Activated CD4-positive, alpha-beta T cell treated with anti-CD3 and anti-CD28 coated beads, Interleukin-2, amount 10 ng/mL, durations not matched to agents 7 days and 5 days (primary cell): ENCODE measurements at regions of chr6 and their contacts with region 1.

Region 1: DNA sequence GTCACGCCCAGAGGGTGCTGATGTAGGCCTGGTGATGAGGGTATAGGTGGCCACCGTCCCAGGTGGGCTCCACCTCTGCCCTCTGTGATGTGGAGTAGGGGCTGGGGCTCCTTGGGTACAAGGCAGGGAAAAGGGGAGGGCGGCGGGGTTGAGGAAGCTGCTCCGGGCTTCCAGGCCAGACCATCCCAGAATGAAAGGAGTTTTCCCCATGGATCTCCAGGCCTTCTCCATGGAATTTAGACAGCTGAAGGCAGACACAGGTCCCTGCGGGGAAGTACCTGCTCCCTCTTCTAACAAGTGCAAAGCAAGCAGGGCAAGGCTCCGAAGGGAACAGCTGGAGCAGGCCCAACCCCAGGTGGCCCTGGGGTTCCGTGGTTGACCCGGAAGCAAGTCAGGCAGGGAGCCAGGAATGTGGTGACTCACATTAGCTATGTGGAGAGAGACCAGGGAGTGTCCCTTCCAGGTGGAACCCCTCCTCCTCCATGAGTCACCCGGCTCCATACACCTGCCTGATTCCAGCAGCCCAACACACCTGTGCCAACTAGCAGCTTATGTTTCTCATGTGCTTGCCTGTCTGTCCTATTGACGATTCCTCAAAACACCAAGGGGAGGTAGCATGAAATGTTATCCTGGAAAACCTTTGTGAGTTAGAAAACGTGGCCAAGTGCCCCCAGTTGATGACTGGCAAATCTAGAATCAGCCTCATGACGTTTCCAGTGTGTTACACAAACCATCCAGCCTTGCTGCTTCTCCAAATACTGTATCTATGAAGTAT is 59.7 kb upstream of the SNX9 start:
- DNase-seq: no peak
- H3K4me3 Mint-ChIP-seq: no peak overlapping the region
- H3K27ac Mint-ChIP-seq: peak overlapping the region; percentile 83
- H3K4me1 Mint-ChIP-seq: peaks cover 65% of the 10 kb centered on the region
- H3K27me3 Mint-ChIP-seq: peaks cover 30% of the 10 kb centered on the region

Region 2: DNA sequence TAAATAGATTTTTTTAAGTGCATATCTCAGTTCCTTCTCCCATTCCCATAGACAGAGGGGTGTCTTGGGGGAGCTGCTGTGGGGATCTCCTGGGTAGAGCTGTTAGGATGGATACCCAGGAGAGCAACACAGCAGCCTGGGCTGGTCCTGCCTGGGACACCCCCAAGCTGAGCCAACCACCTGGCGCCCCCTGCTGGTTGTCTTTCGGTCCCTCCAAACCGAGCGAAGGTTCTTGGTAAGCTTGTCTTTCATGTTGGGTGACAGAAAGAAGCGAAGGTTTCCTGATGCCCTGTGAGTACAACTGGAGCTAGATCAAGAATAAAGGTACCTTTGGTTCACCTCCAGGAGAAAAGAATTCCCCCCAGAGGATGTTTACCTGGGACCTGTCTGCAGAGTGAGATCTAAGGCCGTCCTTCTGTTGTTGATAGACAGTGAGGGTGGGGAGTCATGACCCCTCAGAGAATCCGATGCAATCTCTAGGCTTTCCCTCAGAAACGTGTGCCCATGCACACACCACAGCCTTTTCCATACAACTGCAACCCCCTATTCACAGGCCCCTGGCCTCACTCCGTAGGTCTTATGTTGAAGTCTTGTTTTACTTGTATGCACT is 110.5 kb after region 1 on chr6:
- CTCF ChIA-PET with region 1: interaction called, 15 read pairs
- POLR2A ChIA-PET with region 1: no interaction called
- DNase-seq: peak; percentile 87
- H3K4me3 Mint-ChIP-seq: no peak overlapping the region
- H3K27ac Mint-ChIP-seq: no peak overlapping the region
- H3K4me1 Mint-ChIP-seq: peaks cover 23% of the 10 kb centered on the region
- H3K27me3 Mint-ChIP-seq: no peaks in the 10 kb centered on the region

Region 3: DNA sequence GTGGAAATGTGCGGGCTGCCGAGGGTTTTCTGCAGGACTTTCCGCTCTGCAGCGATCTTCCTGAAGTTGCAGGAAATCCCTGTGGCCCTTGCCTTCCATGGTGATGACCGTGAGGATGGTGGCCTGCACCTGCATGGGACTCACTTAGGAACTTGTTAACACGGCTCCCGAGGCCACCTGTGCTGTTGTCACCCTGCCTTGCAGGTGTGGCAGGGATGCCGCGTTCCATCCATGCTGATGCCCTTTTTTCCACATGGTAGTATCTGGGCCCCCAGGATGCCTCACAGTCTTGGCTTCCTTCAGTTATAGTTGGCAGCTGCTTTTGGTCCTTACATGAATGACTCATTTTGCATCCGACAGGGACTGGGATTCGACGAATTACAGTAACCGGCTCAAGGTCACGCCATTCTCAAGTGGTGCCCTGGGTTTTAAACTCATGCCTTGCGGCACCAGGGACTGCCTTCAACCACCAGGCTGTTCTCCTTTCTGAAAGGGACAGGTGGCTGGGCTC is 255.6 kb after region 1 on chr6:
- CTCF ChIA-PET with region 1: no interaction called
- POLR2A ChIA-PET with region 1: no interaction called
- DNase-seq: no peak
- H3K4me3 Mint-ChIP-seq: no peak overlapping the region
- H3K27ac Mint-ChIP-seq: no peak overlapping the region
- H3K4me1 Mint-ChIP-seq: peaks cover 14% of the 10 kb centered on the region
- H3K27me3 Mint-ChIP-seq: no peaks in the 10 kb centered on the region